ENCODE measurements at regions of chr17 and their contacts with region 1.

Region 1: DNA sequence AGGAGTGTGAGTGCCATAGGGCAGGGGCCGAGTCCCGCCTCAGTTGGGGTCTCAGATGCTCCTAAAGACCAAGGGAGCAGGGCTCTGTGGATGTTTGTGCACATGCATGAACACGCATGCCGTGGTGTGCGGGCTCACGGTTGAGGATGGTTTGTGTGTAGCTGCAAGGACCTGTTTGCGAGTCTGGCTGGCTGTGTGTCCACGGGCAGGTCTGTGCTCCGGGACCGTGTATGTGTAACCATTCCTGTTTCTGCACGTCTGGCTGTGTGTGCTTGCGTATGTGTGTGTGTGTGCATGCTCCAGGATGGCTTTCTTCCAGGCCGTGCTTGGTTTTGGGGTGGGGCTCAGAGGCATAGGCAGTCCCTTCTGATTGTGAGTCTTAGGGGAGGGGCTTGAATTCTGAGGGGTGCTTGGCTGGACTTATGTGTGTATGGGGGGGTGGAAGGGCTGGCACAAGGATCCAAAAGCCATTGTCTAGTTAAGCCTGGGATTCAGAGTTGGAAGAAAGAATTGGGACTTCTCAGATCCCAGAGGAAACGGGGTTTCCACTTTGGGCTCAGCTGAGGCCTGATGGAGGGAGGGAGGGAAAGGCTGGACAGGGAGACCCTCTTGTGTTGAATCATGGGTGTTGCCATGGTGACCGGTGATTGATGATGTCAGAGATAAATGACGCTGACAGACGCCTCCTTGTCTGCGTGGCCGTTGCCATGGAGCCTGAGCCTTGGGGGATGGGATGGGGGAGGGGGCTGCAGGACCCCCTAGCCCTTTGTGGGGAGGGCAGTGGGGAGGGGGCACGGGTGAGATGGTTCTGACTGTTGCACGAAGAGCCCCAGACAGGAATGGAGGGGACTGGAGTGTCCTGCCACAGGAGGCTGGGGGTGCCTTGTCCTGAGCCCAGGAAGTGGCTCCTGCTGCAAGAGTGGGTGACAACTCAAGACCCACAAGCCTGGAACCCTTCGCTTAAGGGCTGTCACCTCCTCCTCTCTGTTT is 14.3 kb downstream of the GJD3 start:
- DNase-seq: no peak
- ATAC-seq: no peak
- H3K4me3 ChIP-seq: no peak overlapping the region
- H3K27ac ChIP-seq: no peak overlapping the region
- H3K4me1 ChIP-seq: peaks cover 45% of the 10 kb centered on the region
- H3K27me3 ChIP-seq: no peaks in the 10 kb centered on the region
- CTCF ChIP-seq: no peak
- POLR2A ChIP-seq: no peak

Region 2: GRCh38 chr17:40283662-40284061 is 66.6 kb before region 1 on chr17:
- intact Hi-C with region 1: no loop called
- DNase-seq: no peak
- ATAC-seq: no peak
- H3K4me3 ChIP-seq: no peak overlapping the region
- H3K27ac ChIP-seq: peak overlapping the region; percentile 11 to 68 (median 52)
- H3K4me1 ChIP-seq: peaks cover 21% of the 10 kb centered on the region
- H3K27me3 ChIP-seq: no peaks in the 10 kb centered on the region
- CTCF ChIP-seq: no peak
- POLR2A ChIP-seq: no peak

Region 3: GRCh38 chr17:40307001-40307730 is 43.0 kb before region 1 on chr17:
- intact Hi-C with region 1: loop called (anchors 2 kb)
- DNase-seq: no peak
- ATAC-seq: no peak
- H3K4me3 ChIP-seq: no peak overlapping the region
- H3K27ac ChIP-seq: peak overlapping the region in 1 of 4 donors; percentile 18
- H3K4me1 ChIP-seq: peaks cover 36% of the 10 kb centered on the region
- H3K27me3 ChIP-seq: no peaks in the 10 kb centered on the region
- CTCF ChIP-seq: no peak
- POLR2A ChIP-seq: no peak

Measured in body of pancreas (tissue), 4 donors.